Activated CD4-positive, alpha-beta memory T cell treated with anti-CD3 and anti-CD28 coated beads for 36 hours (primary cell): ENCODE measurements at regions of chr9 and their contacts with region 1.

Region 1: GRCh38 chr9:136978073-136978864 is 965 bp downstream of the PTGDS start:
- DNase-seq: peak; percentile 77
- H3K4me3 Mint-ChIP-seq: no peak overlapping the region
- H3K27ac Mint-ChIP-seq: no peak overlapping the region
- H3K4me1 Mint-ChIP-seq: peaks cover 17% of the 10 kb centered on the region
- H3K27me3 Mint-ChIP-seq: peaks cover 1% of the 10 kb centered on the region

Region 2: GRCh38 chr9:136059321-136060233 is 918.7 kb before region 1 on chr9:
- CTCF ChIA-PET with region 1: no interaction called
- POLR2A ChIA-PET with region 1: no interaction called
- intact Hi-C with region 1: no loop called
- DNase-seq: no peak
- H3K4me3 Mint-ChIP-seq: no peak overlapping the region
- H3K27ac Mint-ChIP-seq: no peak overlapping the region
- H3K4me1 Mint-ChIP-seq: peaks cover 11% of the 10 kb centered on the region
- H3K27me3 Mint-ChIP-seq: peaks cover 3% of the 10 kb centered on the region

Region 3: DNA sequence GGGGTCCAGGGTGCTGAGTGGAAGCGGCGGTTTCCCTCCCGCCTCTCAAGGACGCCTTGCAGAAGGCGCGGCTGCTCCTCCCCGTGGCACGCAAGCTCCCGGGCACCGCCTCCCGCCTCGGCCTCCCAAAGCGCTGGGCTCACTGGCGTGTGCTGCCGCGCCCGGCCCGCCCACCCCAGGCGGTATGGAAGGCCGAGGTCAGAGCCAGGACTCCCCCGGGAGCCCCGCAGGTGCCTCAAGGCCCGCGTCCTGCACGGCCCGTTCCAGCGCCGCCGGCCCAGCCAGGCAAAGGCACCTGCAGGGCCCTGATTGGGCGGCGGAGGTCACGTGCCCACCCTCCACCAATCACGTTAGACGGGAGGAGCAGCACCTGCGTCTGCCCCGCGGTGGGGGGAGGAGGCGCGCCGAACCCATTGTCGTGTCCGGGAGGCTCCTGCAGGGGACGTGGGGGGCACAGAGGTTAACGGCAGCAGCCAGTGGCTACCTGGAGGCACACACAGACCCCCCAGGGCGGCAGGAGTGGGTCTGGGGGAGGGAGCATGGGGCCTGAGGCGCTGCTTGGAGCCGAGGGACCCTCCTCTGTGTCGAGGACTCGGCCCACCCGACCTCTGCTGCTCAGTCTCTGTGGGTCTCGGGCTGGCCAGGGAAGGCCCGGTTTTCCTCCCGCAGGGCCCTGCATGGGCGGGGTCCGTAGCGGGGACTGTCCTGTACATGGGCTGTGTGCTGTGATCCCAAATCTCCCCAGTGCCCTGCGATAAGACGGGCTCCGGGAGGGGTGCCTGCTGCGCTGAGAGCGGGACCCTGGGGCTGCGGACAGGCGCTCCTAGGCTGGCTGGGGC is 28.2 kb before region 1 on chr9:
- CTCF ChIA-PET with region 1: interaction called, 13 read pairs
- POLR2A ChIA-PET with region 1: no interaction called
- intact Hi-C with region 1: no loop called
- DNase-seq: peak; percentile 98
- H3K4me3 Mint-ChIP-seq: peak overlapping the region; percentile 78
- H3K27ac Mint-ChIP-seq: peak overlapping the region; percentile 76
- H3K4me1 Mint-ChIP-seq: peaks cover under 1% of the 10 kb centered on the region
- H3K27me3 Mint-ChIP-seq: no peaks in the 10 kb centered on the region

Region 4: GRCh38 chr9:136991993-136992818 is 13.9 kb after region 1 on chr9 and contains the start of gene PAXX:
- CTCF ChIA-PET with region 1: interaction called, 8 read pairs
- POLR2A ChIA-PET with region 1: interaction called, 3 read pairs
- intact Hi-C with region 1: loop called (anchors 1 kb)
- DNase-seq: peak; percentile 96
- H3K4me3 Mint-ChIP-seq: peak within 1 kb of the TSS; percentile 82
- H3K27ac Mint-ChIP-seq: peak within 1 kb of the TSS; percentile 79
- H3K4me1 Mint-ChIP-seq: peaks cover 18% of the 10 kb centered on the region
- H3K27me3 Mint-ChIP-seq: peaks cover 4% of the 10 kb centered on the region
- total RNA-seq, gene PAXX: 71.0 to 71.2 TPM

Region 5: GRCh38 chr9:137012694-137013584 is 34.7 kb after region 1 on chr9:
- CTCF ChIA-PET with region 1: no interaction called
- POLR2A ChIA-PET with region 1: no interaction called
- intact Hi-C with region 1: no loop called
- DNase-seq: no peak
- H3K4me3 Mint-ChIP-seq: no peak overlapping the region
- H3K27ac Mint-ChIP-seq: no peak overlapping the region
- H3K4me1 Mint-ChIP-seq: no peaks in the 10 kb centered on the region
- H3K27me3 Mint-ChIP-seq: no peaks in the 10 kb centered on the region

Region 6: DNA sequence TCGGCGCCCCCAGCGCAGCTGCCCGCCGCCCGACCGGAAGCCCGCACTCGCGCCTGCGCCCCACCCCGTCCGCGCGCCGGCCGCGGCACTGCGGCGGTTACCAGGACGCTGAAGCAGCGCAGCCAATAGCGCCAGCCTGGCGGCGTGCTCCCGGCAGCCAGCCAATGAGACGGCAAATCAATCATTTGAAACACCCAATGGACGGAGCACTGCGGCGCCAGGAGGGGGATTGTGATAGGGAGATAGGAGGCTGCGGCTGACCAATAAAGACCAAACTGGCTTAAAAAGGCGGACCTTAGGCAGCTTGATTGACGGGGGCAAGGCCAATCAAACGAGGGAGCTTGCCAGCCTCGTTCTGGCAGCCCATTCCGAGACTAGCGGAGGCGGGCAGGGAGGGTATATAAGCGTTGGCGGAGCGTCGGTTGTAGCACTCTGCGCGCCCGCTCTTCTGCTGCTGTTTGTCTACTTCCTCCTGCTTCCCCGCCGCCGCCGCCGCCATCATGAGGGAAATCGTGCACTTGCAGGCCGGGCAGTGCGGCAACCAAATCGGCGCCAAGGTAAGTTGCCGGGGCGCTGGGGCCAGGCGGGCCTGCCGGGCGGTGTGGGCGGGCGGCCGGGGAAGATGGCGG is 262.7 kb after region 1 on chr9 and contains the start of gene TUBB4B:
- CTCF ChIA-PET with region 1: no interaction called
- POLR2A ChIA-PET with region 1: no interaction called
- intact Hi-C with region 1: no loop called
- DNase-seq: peak; percentile 99
- H3K4me3 Mint-ChIP-seq: peak within 1 kb of the TSS; percentile 88
- H3K27ac Mint-ChIP-seq: peak within 1 kb of the TSS; percentile 94
- H3K4me1 Mint-ChIP-seq: peaks cover 21% of the 10 kb centered on the region
- H3K27me3 Mint-ChIP-seq: no peaks in the 10 kb centered on the region
- total RNA-seq, gene TUBB4B: 320 to 325 TPM